ENCODE measurements at regions of chr12 and their contacts with region 1.

Region 1: GRCh38 chr12:121626087-121626852 is at the start of gene ORAI1:
- DNase-seq: peak; percentile 98 to 99
- ATAC-seq: peak; percentile 88 to 94 (median 90)
- H3K4me3 ChIP-seq: peak within 1 kb of the TSS; percentile 87
- H3K27ac ChIP-seq: peak within 1 kb of the TSS; percentile 96
- H3K4me1 ChIP-seq: peaks cover 44% of the 10 kb centered on the region
- H3K27me3 ChIP-seq: no peaks in the 10 kb centered on the region
- CTCF ChIP-seq: peak; percentile 25
- total RNA-seq, gene ORAI1: 17.9 to 34.2 (median 30.2) TPM

Region 2: DNA sequence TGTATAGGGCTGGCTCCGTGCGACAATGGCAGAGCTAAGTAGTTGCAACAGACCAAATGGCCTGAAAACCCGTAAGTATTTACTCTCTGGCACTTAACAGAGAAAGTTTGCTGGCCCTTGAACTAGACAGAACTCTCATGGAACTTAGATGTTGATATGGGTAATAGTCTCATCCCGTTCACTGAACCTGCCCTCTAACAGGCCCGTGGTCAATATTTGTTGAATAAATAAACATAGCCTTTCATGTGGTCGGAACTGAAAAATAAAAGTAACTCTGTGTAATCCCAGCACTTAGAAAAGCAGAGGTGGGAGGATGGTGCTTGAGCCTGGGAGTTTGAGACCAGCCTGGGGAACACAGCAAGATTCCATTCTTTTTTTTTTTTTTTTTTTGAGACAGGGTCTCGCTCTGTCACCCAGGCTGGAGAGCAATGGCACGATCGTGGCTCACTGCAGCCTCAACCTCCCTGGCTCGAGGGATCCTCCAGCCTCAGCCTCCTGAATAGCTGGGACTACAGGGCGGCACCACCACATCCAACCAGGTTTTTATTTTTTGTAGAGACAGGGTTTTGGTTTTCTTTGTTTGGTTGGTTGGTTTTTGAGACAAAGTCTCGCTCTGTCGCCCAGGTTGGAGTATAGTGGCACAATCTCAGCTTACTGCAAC is 75.2 kb before region 1 on chr12:
- intact Hi-C with region 1: loop called (anchors 1 to 5 kb)
- DNase-seq: no peak
- ATAC-seq: no peak
- H3K4me3 ChIP-seq: no peak overlapping the region
- H3K27ac ChIP-seq: no peak overlapping the region
- H3K4me1 ChIP-seq: no peaks in the 10 kb centered on the region
- H3K27me3 ChIP-seq: no peaks in the 10 kb centered on the region
- CTCF ChIP-seq: no peak

Region 3: DNA sequence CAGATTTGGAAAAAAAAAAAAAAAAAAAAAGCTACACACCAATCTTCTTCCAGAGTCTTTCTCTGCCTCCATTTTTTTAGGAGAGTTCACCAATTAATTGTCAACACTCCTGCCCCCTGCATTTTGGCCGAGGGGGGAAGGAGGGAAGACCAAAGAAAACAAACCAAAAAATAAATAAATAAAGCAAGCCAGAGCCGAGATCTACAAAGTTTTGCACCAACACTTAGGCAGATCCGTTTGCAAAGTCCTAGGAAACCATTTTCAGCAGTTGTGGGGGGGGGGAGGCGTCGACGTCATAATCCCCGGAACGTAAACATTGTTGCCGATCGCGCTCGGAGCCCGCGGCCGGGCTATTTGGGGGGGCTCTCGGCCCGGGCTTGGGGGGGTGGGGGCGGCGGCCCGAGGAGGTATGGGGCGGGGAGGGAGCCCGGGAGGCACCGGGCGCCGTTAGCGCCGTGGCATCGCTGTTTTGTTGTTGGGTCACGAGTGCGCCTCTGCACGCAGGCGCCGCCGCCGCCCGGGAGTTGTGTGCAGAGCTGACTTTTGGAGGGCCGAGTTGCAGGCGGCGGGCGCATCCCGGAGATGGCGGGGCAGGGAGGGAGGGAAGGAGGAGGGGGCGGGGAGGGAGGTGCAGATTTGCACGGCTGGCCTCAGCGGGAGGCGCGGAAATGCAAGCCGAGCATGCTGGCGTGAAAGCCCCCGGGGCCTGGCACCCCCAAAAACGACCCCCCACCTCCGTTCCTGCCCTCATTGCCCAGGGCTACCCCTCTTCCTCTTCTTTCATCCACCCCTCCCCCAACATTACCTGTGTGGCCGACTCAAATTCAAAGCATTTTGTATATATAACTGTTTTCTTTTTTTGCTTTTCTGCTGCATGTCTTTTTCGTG is 46.0 kb before region 1 on chr12:
- intact Hi-C with region 1: loop called (anchors 5 kb)
- DNase-seq: peak; percentile 74 to 86
- ATAC-seq: peak; percentile 52 to 75 (median 68)
- H3K4me3 ChIP-seq: peak overlapping the region; percentile 82
- H3K27ac ChIP-seq: peak overlapping the region; percentile 93
- H3K4me1 ChIP-seq: peaks cover 32% of the 10 kb centered on the region
- H3K27me3 ChIP-seq: no peaks in the 10 kb centered on the region
- CTCF ChIP-seq: no peak

Region 4: GRCh38 chr12:121668750-121669520 is 42.7 kb after region 1 on chr12:
- intact Hi-C with region 1: loop called in 1 of 2 experiments (anchors 5 kb)
- DNase-seq: peak; percentile 36 to 64
- ATAC-seq: no peak
- H3K4me3 ChIP-seq: no peak overlapping the region
- H3K27ac ChIP-seq: no peak overlapping the region
- H3K4me1 ChIP-seq: peaks cover 4% of the 10 kb centered on the region
- H3K27me3 ChIP-seq: no peaks in the 10 kb centered on the region
- CTCF ChIP-seq: peak; percentile 55